ENCODE measurements at regions of chr20 and their contacts with region 1.

Region 1: DNA sequence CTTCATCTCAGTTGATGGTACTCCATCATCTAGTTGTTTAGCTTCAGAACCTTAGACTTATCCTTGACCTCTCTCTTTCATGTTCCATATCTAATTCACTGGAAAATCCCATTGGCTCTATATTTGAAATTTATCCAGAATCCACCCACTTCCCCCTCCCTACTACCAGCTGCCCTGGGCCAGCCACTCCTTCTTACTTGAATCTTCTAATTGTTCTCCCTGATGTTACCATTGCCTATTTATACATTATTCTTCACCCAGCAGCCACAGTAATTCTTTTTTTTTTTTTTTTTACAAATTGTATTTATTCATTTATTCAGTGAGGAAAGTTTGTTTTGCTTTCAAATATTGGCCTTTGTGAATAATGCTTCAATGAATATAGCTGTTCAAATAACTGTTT is 8.2 kb downstream of the SEC23B start:
- DNase-seq: no peak
- H3K4me3 ChIP-seq: no peak overlapping the region
- H3K27ac ChIP-seq: no peak overlapping the region
- H3K4me1 ChIP-seq: no peaks in the 10 kb centered on the region
- H3K27me3 ChIP-seq: no peaks in the 10 kb centered on the region
- CTCF ChIP-seq: no peak

Region 2: GRCh38 chr20:18250217-18250616 is 265.8 kb before region 1 on chr20:
- CTCF ChIA-PET with region 1: no interaction called
- POLR2A ChIA-PET with region 1: no interaction called
- intact Hi-C with region 1: no loop called
- DNase-seq: no peak
- H3K4me3 ChIP-seq: no peak overlapping the region
- H3K27ac ChIP-seq: no peak overlapping the region
- H3K4me1 ChIP-seq: peaks cover 40% of the 10 kb centered on the region
- H3K27me3 ChIP-seq: no peaks in the 10 kb centered on the region
- CTCF ChIP-seq: no peak

Region 3: GRCh38 chr20:18537651-18538050 is 21.7 kb after region 1 on chr20:
- CTCF ChIA-PET with region 1: no interaction called
- POLR2A ChIA-PET with region 1: interaction called, 10 read pairs
- intact Hi-C with region 1: no loop called
- DNase-seq: no peak
- H3K4me3 ChIP-seq: no peak overlapping the region
- H3K27ac ChIP-seq: no peak overlapping the region
- H3K4me1 ChIP-seq: no peaks in the 10 kb centered on the region
- H3K27me3 ChIP-seq: no peaks in the 10 kb centered on the region
- CTCF ChIP-seq: no peak

Region 4: GRCh38 chr20:18793625-18794427 is 277.9 kb after region 1 on chr20:
- CTCF ChIA-PET with region 1: no interaction called
- POLR2A ChIA-PET with region 1: no interaction called
- intact Hi-C with region 1: no loop called
- DNase-seq: peak; percentile 72 to 88
- H3K4me3 ChIP-seq: peak overlapping the region; percentile 79
- H3K27ac ChIP-seq: peak overlapping the region; percentile 7; the same call in 1 of the 2 replicates
- H3K4me1 ChIP-seq: peaks cover 8% of the 10 kb centered on the region
- H3K27me3 ChIP-seq: 0 out of 2 replicates have a peak, but pooled peaks cover 13% of the 10 kb centered on the region
- CTCF ChIP-seq: no peak